Right cardiac atrium (tissue), 5 donors: ENCODE measurements at regions of chr12 and their contacts with region 1.

Region 1: DNA sequence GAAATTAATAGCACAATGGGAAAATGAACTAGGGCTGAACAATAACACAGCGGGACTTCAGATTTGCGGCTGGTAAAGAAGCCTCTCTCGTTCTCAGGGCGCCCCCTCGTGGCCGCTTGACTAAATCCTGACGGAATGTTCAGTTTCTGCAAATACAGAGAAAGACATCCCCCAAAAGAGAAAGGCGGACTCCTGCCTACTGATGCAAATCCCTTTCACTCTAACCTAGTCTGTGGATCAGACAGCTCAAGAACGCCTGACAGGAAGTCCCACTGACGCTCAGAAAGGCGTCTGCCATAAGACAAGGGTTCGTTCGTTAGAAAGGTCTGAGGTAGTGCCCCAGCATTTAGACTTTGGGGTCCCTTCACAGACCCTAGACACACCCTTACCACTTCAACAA is 2.5 kb downstream of the NUAK1 start:
- DNase-seq: peak; percentile 87 to 96 (median 94)
- ATAC-seq: peak; percentile 15 to 16
- H3K4me3 ChIP-seq: peak overlapping the region; percentile 87
- H3K27ac ChIP-seq: peak overlapping the region; percentile 93
- H3K4me1 ChIP-seq: peaks cover 34% of the 10 kb centered on the region
- H3K27me3 ChIP-seq: no peaks in the 10 kb centered on the region

Region 2: GRCh38 chr12:105420659-105421240 is 715.5 kb before region 1 on chr12:
- intact Hi-C with region 1: loop called (anchors 5 to 10 kb)
- DNase-seq: peak; percentile 74 to 84 (median 75)
- ATAC-seq: peak; percentile 87 to 93
- H3K4me3 ChIP-seq: no peak overlapping the region
- H3K27ac ChIP-seq: no peak overlapping the region
- H3K4me1 ChIP-seq: no peaks in the 10 kb centered on the region
- H3K27me3 ChIP-seq: no peaks in the 10 kb centered on the region

Region 3: GRCh38 chr12:105705765-105706164 is 430.5 kb before region 1 on chr12:
- intact Hi-C with region 1: loop called in 3 of 4 experiments (anchors 10 kb)
- DNase-seq: peak in 2 of 3 donors; percentile 26 to 32
- ATAC-seq: peak; percentile 41 to 67
- H3K4me3 ChIP-seq: no peak overlapping the region
- H3K27ac ChIP-seq: peak overlapping the region; percentile 20
- H3K4me1 ChIP-seq: peaks cover 5% of the 10 kb centered on the region
- H3K27me3 ChIP-seq: no peaks in the 10 kb centered on the region

Region 4: DNA sequence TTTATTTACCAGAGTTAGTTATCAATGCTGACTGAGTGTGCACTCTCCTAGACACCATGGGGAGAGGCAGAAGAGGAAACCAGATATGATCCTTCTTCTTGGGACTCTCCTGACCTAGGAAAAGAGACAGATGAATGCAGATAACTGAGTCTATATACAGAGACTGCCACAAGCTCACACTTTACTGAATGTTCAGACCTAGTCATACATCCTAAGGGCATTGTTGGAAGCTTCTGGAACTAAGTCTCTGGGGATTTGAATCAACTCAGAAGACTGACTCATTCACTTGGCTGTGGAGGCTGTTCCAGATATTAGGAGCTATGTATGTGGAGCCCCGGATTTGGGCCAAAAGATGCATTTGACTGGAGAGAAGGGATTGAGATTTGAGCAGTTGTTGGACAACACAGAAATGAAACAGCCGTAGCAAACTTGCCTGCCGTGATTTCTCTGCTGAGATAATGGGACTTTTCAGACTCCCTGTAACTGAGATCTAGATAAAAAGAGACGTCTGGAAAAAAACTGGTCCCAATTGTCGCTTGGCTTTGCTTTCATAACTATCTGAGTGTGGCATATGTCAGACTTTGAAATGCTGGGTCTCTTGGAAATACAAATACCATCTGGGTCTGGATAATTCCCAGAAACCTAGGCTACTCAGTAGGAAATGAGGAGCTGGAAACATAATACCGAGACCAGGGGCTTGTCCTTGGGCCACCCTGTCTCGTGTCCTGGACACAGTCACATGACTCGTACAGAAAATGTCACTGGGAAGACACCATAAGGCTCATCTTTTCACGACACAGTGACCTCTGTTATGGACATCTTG is 394.3 kb before region 1 on chr12:
- intact Hi-C with region 1: loop called in 1 of 4 experiments (anchors 10 kb)
- DNase-seq: peak; percentile 34 to 43 (median 39)
- ATAC-seq: peak; percentile 62 to 85
- H3K4me3 ChIP-seq: no peak overlapping the region
- H3K27ac ChIP-seq: peak overlapping the region; percentile 80
- H3K4me1 ChIP-seq: peaks cover 12% of the 10 kb centered on the region
- H3K27me3 ChIP-seq: no peaks in the 10 kb centered on the region

Region 5: DNA sequence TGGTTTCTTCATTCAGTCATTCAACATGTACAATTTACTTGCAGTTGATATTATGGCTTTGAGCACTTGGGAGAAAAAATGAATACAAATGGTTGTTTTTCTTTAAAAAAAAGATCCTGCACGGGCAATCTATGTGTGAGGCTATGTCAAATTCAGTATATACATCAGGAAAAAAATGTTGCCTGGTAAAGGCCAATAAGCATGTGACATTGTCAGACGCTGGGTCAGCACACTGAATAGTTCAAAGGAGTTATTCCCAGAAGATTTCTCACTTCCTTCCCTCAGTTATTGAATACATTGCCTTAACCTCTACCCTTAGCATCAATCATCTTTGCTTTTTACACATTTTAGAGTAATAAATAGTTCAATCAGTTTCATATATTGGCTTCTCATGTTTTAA is 316.7 kb before region 1 on chr12:
- intact Hi-C with region 1: loop called in 1 of 4 experiments (anchors 5 kb)
- DNase-seq: no peak
- ATAC-seq: no peak
- H3K4me3 ChIP-seq: no peak overlapping the region
- H3K27ac ChIP-seq: no peak overlapping the region
- H3K4me1 ChIP-seq: peaks cover 16% of the 10 kb centered on the region
- H3K27me3 ChIP-seq: no peaks in the 10 kb centered on the region

Region 6: DNA sequence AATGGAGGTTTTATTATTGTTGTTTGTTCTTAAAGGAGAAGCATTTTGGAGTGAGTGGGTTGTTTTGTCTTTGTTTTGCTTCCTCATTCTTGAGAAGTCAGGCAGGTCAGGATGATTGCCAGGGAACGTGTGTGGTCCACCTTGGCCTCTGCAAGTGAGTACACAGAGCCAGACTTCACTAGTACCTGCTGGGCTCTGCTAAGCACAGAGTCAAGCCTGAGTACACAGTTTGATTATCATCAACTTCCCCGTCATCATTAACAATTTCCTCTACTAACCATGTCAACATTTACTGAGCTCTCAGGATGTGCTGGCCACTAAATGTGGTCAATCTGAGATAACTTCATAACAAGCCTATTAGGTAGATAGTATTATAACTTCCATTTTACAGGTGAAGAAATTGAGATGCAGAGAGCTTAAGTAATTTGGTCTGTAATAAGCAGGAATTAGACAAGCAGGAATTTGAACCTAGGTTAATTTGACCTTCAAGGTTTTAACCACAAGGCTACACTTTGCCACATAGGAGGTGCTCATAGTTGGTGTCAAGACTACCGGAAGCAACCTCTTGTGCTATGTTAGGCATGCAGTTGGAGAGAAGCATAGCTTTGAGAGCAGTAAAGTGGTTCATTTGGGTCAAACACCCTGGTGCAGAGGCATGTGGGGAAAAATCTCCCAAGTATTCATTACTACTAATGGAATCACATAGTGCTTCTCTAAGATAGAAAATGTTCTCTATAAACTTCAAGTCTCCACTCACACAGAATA is 175.8 kb before region 1 on chr12:
- intact Hi-C with region 1: no loop called
- DNase-seq: no peak
- ATAC-seq: peak in 1 of 2 donors; percentile 51
- H3K4me3 ChIP-seq: no peak overlapping the region
- H3K27ac ChIP-seq: no peak overlapping the region
- H3K4me1 ChIP-seq: peaks cover 2% of the 10 kb centered on the region
- H3K27me3 ChIP-seq: no peaks in the 10 kb centered on the region

Region 7: DNA sequence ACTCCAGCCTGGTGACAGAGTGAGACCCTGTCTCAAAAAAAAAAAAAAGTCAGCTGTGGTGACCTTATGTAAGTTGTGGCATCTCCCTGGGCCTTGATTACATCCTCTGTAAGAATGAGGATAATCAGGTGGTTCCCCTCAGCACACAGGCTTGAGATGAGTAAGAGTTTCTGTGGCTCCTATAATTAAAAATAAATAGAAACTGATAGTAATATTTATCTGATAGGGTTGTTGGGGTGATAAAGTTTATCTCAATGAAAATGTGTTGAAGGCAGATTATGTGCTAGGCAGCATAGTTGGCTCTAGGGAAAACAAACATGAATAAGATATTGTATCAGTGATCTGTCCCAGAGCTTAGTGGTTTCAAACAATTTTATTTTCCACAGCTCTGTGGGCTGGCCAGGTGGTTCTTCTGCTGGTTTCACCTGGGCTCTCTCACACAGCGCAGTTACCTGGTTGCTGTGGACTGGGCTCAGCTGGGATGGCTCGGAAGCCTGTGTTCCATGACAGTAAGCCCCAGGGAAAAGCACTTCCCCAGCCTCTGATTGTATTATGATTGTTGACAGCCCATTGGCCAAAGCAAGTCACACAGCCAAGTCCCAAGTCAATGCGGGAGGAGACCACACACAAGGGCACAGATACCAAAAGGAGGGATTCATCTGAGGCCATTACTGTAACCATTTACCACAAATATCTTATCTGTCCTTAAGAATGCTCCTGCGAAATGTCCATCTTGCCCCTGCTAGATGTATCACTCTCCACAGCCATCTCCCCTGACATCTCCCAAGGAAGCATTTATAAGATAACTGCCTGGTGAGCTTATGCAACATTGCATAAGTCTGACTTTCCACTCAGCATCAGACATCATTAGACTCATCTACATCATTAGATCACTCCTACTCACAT is 149.2 kb before region 1 on chr12:
- intact Hi-C with region 1: loop called in 1 of 4 experiments (anchors 10 kb)
- DNase-seq: no peak
- ATAC-seq: no peak
- H3K4me3 ChIP-seq: no peak overlapping the region
- H3K27ac ChIP-seq: no peak overlapping the region
- H3K4me1 ChIP-seq: no peaks in the 10 kb centered on the region
- H3K27me3 ChIP-seq: no peaks in the 10 kb centered on the region

Region 8: DNA sequence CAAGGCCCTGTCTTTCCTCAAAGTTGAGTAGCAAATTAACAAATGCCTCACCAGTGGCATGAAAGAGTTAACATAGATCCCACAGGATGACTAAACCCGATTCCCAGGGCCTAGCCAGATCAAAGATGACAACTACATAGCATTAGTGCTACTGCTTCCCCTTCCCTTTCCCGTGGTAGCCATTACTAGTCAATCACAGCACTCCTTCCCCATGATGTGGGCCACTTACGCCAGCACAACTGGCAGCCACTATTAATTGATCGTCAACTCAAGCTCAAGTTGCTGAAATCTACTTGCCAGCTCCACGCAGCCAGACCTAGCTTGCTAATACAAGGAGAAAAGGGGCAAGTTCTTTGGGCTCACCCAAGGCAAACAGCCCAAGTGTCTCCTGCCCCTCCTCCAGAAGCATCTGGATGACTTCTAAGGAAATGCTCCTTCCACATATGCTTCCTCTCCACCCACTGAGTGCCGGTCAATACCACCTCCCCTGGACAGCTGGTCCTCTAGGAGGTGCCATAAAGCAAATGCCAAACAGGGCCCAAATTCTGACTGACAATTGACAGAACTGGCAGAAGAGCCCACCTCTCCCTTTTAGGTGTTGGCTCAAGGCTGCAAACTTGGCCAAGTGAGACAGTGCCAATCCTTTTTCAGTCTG is 70.1 kb before region 1 on chr12:
- intact Hi-C with region 1: no loop called
- DNase-seq: no peak
- ATAC-seq: no peak
- H3K4me3 ChIP-seq: no peak overlapping the region
- H3K27ac ChIP-seq: no peak overlapping the region
- H3K4me1 ChIP-seq: peaks cover 3% of the 10 kb centered on the region
- H3K27me3 ChIP-seq: no peaks in the 10 kb centered on the region